ENCODE measurements at regions of chr6 and their contacts with region 1.

Region 1: GRCh38 chr6:149169761-149170511 is 147.6 kb upstream of the TAB2 start:
- DNase-seq: no peak
- H3K4me3 ChIP-seq: no peak overlapping the region
- H3K27ac ChIP-seq: no peak overlapping the region
- H3K4me1 ChIP-seq: peaks cover 4% of the 10 kb centered on the region
- H3K27me3 ChIP-seq: no peaks in the 10 kb centered on the region
- CTCF ChIP-seq: no peak
- POLR2A ChIP-seq: no peak

Region 2: DNA sequence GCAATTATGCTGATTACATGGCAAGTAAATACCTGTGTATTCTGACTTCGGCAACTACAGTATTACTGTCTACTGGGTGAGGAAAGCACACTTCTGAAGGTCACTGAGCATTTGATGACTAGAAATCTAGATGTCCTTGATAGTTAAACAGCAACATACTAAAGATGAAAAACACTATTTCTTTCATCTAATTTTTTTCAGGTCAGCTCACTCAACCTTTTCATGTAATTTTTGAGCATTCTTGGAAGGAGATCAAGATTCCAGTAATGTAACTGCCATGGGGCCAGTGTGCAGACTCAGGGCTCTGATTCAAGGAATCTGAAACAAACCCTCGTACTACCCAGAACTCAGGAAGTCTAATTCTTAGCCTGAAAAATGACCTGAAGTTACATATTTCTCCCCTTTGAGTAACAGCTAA is 75.0 kb before region 1 on chr6:
- intact Hi-C with region 1: loop called (anchors 5 kb)
- DNase-seq: no peak
- H3K4me3 ChIP-seq: no peak overlapping the region
- H3K27ac ChIP-seq: no peak overlapping the region
- H3K4me1 ChIP-seq: peaks cover 19% of the 10 kb centered on the region
- H3K27me3 ChIP-seq: no peaks in the 10 kb centered on the region
- CTCF ChIP-seq: no peak
- POLR2A ChIP-seq: no peak

Region 3: GRCh38 chr6:149335924-149336608 is 166.1 kb after region 1 on chr6:
- intact Hi-C with region 1: no loop called
- DNase-seq: no peak
- H3K4me3 ChIP-seq: no peak overlapping the region
- H3K27ac ChIP-seq: no peak overlapping the region
- H3K4me1 ChIP-seq: peaks cover 7% of the 10 kb centered on the region
- H3K27me3 ChIP-seq: no peaks in the 10 kb centered on the region
- CTCF ChIP-seq: no peak
- POLR2A ChIP-seq: no peak